HCT116 (cell line): ENCODE measurements at regions of chr7 and their contacts with region 1.

Region 1: DNA sequence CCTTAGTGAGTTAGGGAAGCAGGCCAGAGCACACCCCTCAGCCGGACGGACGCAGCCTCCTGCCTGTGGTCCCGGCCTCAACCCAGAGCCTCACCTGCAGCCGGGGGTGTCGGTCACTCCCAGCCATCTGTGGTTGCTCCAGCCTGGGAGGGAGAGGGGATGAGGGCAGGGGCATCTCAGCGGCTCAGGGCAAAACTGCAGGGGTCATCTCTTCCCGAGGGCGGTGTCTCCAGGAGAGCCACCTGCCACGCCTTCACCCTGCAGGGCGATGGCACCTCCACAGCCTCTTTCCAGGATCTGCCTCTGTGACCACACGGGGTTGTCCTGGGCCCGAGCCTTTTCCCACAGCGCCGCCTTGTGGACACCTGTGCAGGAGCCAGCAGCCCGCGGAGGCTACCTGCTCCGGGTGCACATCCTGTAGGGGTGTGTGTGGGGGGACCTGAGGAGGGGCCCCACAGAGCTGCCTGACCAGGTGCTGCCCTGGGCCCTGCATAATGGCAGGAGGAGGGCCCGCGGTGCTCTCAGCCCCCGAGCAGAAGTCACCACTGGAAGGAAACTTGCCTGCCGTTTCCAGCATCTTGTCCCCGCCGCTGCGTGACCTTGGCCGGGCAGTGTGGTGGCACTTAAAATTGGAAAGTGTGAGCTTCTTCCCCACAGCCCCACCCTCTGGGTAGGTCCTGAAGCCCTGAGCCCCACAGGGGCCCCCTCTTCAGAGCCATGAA is 21.6 kb upstream of the AP5Z1 start:
- DNase-seq: peak; percentile 51
- ATAC-seq: peak; percentile 100
- H3K4me3 ChIP-seq: no peak overlapping the region
- H3K27ac ChIP-seq: no peak overlapping the region
- H3K4me1 ChIP-seq: peaks cover 0 to 9% of the 10 kb centered on the region in 2 experiments; a peak in 1 of 4 replicates
- H3K27me3 ChIP-seq: no peaks in the 10 kb centered on the region
- CTCF ChIP-seq: peak; percentile 91 to 97 (median 94)
- POLR2A ChIP-seq: no peak
- RAD21 ChIP-seq: peak; percentile 97

Region 2: DNA sequence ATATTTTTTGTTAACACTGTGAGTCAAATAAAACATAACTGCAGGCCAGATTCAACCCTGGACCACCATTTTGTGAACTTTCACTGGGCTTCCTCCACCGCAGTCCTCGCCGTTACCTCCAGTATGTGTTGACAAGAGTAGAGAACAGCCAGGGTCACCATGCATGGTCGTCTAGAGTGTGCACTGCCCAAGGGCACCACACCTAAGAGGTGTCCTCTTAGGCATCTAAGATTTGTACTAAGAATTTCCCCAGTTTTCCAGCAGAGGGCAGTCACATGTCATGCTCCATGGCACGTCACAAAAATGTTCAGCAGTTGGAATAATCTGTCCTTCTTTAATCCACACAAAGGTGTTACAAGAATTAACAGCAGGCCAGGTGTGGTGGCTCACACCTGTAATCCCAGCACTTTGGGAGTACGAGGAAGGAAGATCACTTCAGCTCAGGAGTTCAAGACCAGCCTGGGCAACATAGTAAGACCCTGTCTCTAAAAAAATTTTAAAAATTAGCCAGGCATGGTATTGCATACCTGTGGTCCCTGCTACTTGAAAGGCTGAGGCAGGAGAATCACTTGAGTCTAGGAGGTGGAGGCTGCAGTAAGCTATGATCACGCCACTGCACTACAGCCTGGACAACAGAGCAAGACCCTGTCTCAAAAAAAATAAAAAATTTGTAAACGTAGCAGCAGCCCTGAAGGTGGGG is 143.0 kb before region 1 on chr7:
- CTCF ChIA-PET with region 1: no interaction called
- POLR2A ChIA-PET with region 1: no interaction called
- RAD21 ChIA-PET with region 1: no interaction called
- intact Hi-C with region 1: loop called (anchors 1 kb)
- DNase-seq: peak; percentile 73
- ATAC-seq: peak; percentile 98
- H3K4me3 ChIP-seq: no peak overlapping the region
- H3K27ac ChIP-seq: no peak overlapping the region
- H3K4me1 ChIP-seq: peaks cover 0 to 5% of the 10 kb centered on the region in 2 experiments; a peak in 1 of 4 replicates
- H3K27me3 ChIP-seq: no peaks in the 10 kb centered on the region
- CTCF ChIP-seq: peak; percentile 72 to 92 (median 74)
- POLR2A ChIP-seq: no peak
- RAD21 ChIP-seq: peak; percentile 96